ENCODE measurements at regions of chr19 and their contacts with region 1.

Region 1: DNA sequence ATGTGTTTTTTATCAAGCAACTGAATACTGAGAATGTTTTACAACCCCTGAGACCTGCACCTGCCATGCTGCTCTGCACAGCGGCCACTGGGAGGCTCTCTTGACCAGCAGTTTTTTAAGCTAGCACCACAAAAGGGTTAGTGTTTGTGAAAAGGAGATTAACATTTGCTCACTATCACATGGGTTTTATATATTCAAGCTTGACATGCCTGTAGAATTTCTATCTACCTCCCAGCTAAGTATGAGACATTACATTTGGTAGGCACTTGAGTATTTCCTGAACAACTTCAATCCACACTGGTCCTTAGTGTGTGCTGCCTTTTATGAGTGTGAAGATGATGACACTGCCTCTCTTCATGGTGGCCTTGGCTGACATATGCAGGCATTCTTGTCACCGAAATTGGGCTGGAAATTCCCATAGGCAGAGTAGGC is 1238.9 kb downstream of the UQCRFS1 start:
- DNase-seq: peak; percentile 2
- ATAC-seq: no peak
- H3K4me3 ChIP-seq: no peak overlapping the region
- H3K27ac ChIP-seq: no peak overlapping the region
- H3K4me1 ChIP-seq: no peaks in the 10 kb centered on the region
- H3K27me3 ChIP-seq: no peaks in the 10 kb centered on the region
- CTCF ChIP-seq: peak; percentile 39; the same call in 1 of the 2 replicates
- EP300 ChIP-seq: no peak
- POLR2A ChIP-seq: no peak
- RAD21 ChIP-seq: no peak

Region 2: DNA sequence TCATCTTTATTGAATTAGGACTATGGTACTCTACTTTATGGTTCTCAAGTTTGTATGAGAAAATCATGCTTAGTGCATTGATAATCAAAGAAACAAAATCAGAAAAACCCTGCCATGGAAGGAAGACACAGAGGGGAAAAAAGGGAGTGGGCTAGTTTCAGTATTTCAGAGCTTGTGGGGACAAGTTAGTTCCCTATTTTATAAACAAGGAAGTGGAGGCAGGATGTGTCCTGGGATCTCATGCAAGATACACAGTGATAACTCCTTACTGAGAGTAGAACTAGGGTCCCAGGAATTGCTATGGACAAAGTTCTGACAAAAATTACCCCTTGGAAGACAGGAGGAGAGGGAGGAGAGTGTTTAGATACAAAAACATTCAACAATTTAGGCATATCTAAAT is 38.4 kb before region 1 on chr19:
- CTCF ChIA-PET with region 1: no interaction called
- POLR2A ChIA-PET with region 1: no interaction called
- in situ Hi-C with region 1: no loop called
- intact Hi-C with region 1: no loop called
- DNase-seq: no peak
- ATAC-seq: no peak
- H3K4me3 ChIP-seq: no peak overlapping the region
- H3K27ac ChIP-seq: no peak overlapping the region
- H3K4me1 ChIP-seq: no peaks in the 10 kb centered on the region
- H3K27me3 ChIP-seq: no peaks in the 10 kb centered on the region
- CTCF ChIP-seq: no peak
- EP300 ChIP-seq: no peak
- POLR2A ChIP-seq: no peak
- RAD21 ChIP-seq: no peak

Region 3: GRCh38 chr19:28009696-28010095 is 35.6 kb after region 1 on chr19:
- CTCF ChIA-PET with region 1: no interaction called
- POLR2A ChIA-PET with region 1: no interaction called
- in situ Hi-C with region 1: no loop called
- intact Hi-C with region 1: no loop called
- DNase-seq: no peak
- ATAC-seq: no peak
- H3K4me3 ChIP-seq: no peak overlapping the region
- H3K27ac ChIP-seq: no peak overlapping the region
- H3K4me1 ChIP-seq: no peaks in the 10 kb centered on the region
- H3K27me3 ChIP-seq: no peaks in the 10 kb centered on the region
- CTCF ChIP-seq: no peak
- EP300 ChIP-seq: no peak
- POLR2A ChIP-seq: no peak
- RAD21 ChIP-seq: no peak

Region 4: DNA sequence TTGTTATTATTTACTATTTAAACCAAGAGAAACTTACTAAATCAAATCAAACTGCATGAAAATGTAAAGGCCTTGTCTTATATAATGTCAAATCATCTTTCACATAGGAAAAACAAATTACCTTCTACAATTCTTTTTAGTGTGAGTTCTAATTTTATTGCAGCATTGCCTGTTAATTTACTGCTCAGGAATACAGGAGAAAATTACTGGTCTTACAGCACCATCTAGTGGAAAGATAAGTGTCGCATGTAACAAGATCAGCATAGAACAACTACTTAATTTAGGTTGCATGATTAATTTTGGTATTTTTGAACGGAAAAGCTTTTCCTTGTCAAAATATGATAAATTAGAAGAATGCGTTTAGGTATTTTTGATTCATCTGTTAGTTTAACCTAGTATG is 736.2 kb after region 1 on chr19:
- CTCF ChIA-PET with region 1: no interaction called
- POLR2A ChIA-PET with region 1: no interaction called
- in situ Hi-C with region 1: loop called (anchors 25 kb)
- intact Hi-C with region 1: no loop called
- DNase-seq: peak; percentile 43
- ATAC-seq: no peak
- H3K4me3 ChIP-seq: no peak overlapping the region
- H3K27ac ChIP-seq: no peak overlapping the region
- H3K4me1 ChIP-seq: no peaks in the 10 kb centered on the region
- H3K27me3 ChIP-seq: no peaks in the 10 kb centered on the region
- CTCF ChIP-seq: peak; percentile 63
- EP300 ChIP-seq: no peak
- POLR2A ChIP-seq: no peak
- RAD21 ChIP-seq: no peak